ENCODE measurements at regions of chr16 and their contacts with region 1.

Region 1: DNA sequence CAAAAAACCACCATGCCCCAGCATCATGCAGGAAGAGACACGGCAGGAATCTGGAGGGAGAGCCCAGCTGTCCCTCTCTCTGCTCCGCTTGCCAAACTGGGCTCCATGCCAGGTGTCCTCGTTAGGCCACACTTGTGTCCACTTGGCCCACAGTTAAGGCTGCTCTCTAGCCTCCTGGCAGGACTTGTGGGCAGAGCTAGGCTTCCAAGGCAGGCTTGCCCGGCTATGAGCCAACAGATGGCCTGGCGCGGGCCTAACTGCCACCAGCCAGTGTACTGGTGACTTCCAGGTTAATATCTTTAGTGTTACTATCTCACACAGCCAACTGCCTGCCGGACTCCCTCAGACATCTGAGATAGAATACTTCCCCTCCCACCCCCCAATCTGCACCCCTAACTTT is 10.6 kb downstream of the ATP6V0D1 start:
- DNase-seq: no peak
- ATAC-seq: no peak
- H3K4me3 Mint-ChIP-seq: no peak overlapping the region
- H3K27ac Mint-ChIP-seq: peak overlapping the region; percentile 0
- H3K4me1 Mint-ChIP-seq: peaks cover 17% of the 10 kb centered on the region
- H3K27me3 Mint-ChIP-seq: no peaks in the 10 kb centered on the region

Region 2: GRCh38 chr16:66947302-66948065 is 522.9 kb before region 1 on chr16:
- CTCF ChIA-PET with region 1: no interaction called
- POLR2A ChIA-PET with region 1: no interaction called
- intact Hi-C with region 1: loop called in 1 of 2 experiments (anchors 5 kb)
- DNase-seq: peak; percentile 92
- ATAC-seq: peak; percentile 92
- H3K4me3 Mint-ChIP-seq: peak overlapping the region; percentile 67
- H3K27ac Mint-ChIP-seq: no peak overlapping the region
- H3K4me1 Mint-ChIP-seq: peaks cover 22% of the 10 kb centered on the region
- H3K27me3 Mint-ChIP-seq: peaks cover 29% of the 10 kb centered on the region

Region 3: GRCh38 chr16:67246934-67247697 is 223.2 kb before region 1 on chr16 and contains the start of gene FHOD1:
- CTCF ChIA-PET with region 1: no interaction called
- POLR2A ChIA-PET with region 1: no interaction called
- intact Hi-C with region 1: no loop called
- DNase-seq: peak; percentile 99
- ATAC-seq: peak; percentile 74
- H3K4me3 Mint-ChIP-seq: peak within 1 kb of the TSS; percentile 87
- H3K27ac Mint-ChIP-seq: peak within 1 kb of the TSS; percentile 85
- H3K4me1 Mint-ChIP-seq: peaks cover 52% of the 10 kb centered on the region
- H3K27me3 Mint-ChIP-seq: peaks cover 11% of the 10 kb centered on the region
- total RNA-seq, gene FHOD1: 75.5 to 77.2 TPM

Region 4: GRCh38 chr16:67260426-67261075 is 209.8 kb before region 1 on chr16:
- CTCF ChIA-PET with region 1: interaction called, 3 read pairs
- POLR2A ChIA-PET with region 1: no interaction called
- intact Hi-C with region 1: loop called in 1 of 2 experiments (anchors 5 kb)
- DNase-seq: peak; percentile 67
- ATAC-seq: peak; percentile 90
- H3K4me3 Mint-ChIP-seq: no peak overlapping the region
- H3K27ac Mint-ChIP-seq: no peak overlapping the region
- H3K4me1 Mint-ChIP-seq: peaks cover 2% of the 10 kb centered on the region
- H3K27me3 Mint-ChIP-seq: peaks cover 2% of the 10 kb centered on the region

Region 5: GRCh38 chr16:67349172-67349571 is 121.2 kb before region 1 on chr16:
- CTCF ChIA-PET with region 1: interaction called, 4 read pairs
- POLR2A ChIA-PET with region 1: no interaction called
- intact Hi-C with region 1: loop called in 1 of 2 experiments (anchors 5 kb)
- DNase-seq: no peak
- ATAC-seq: peak; percentile 55
- H3K4me3 Mint-ChIP-seq: no peak overlapping the region
- H3K27ac Mint-ChIP-seq: no peak overlapping the region
- H3K4me1 Mint-ChIP-seq: peaks cover 2% of the 10 kb centered on the region
- H3K27me3 Mint-ChIP-seq: peaks cover 2% of the 10 kb centered on the region

Region 6: DNA sequence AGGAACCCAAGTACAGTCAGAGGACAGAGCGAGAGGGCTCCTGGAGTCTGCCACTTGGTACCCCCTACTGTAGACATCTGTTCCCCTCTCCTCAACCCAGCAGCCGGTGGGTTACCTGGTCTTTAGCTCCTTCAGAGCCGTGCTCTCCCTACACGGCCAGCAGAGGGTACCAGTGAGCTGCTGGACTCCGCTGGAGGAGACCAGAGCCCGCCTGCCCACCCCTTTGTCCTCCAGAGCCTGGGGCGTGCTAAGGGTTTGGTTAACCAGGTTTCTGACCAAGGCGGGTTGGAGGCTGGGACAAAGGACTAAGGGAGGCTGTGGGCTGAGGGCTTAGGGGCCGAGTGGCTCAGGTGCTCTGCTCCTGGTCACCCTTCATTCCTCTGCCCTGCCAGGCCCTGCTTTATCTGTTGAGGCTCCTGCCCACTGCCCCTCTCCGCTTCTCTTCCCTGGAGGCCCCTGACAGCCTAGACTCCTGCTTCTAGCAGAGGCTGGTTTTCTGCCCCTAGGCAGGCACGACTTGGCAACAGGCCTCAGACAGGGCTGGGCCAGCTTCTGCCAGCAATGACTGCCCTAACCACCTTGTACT is 42.1 kb before region 1 on chr16:
- CTCF ChIA-PET with region 1: interaction called, 34 read pairs
- POLR2A ChIA-PET with region 1: no interaction called
- intact Hi-C with region 1: loop called (anchors 1 to 2 kb)
- DNase-seq: peak; percentile 81
- ATAC-seq: peak; percentile 78
- H3K4me3 Mint-ChIP-seq: no peak overlapping the region
- H3K27ac Mint-ChIP-seq: no peak overlapping the region
- H3K4me1 Mint-ChIP-seq: peaks cover 12% of the 10 kb centered on the region
- H3K27me3 Mint-ChIP-seq: peaks cover 39% of the 10 kb centered on the region

Region 7: DNA sequence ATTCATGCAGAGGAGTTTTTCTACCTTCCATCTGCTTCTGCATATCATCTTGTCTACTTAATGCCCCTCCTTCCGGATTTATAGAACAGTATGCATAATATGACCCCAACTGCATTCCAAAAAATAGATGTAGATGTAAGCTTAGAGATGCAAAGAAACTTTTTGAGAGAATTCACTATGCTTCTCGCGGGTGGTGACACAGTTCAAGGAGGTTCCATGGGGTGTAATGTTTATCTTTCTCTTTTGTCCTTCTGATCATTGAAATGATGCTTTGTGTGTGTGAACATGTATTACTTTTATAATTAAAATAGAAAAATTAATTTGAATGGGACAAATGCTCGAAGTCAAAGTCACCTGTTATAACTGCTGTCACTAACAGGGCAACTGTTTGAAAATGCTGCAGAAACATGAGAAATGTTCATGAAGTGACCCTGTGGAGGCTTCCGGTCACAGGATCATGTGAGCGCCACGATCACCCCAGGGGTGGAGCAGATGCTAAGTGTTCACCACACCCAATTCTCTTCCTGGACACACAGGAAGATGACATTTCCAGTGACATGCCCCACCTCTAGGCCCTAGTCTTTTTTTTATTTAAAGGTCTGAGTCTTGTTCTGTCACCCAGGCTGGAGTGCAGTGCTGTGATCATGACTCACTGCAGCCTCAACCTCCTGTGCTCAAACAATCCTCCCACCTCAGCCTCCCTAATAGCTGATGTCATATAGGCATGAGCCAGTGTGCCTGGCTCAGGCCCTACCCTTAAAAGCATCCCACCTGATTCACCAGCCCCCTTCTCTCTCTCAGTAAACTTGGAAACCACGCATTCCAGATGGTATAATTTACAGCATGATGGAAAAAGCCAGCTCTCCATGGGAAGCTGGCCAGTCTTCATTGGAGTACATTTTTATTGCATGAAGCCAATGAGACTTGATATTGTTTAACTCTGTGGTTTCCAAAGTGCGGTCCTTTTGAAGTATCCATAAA is 34.0 kb after region 1 on chr16:
- CTCF ChIA-PET with region 1: no interaction called
- POLR2A ChIA-PET with region 1: no interaction called
- intact Hi-C with region 1: no loop called
- DNase-seq: peak; percentile 66
- ATAC-seq: peak; percentile 96
- H3K4me3 Mint-ChIP-seq: no peak overlapping the region
- H3K27ac Mint-ChIP-seq: peak overlapping the region; percentile 72
- H3K4me1 Mint-ChIP-seq: peaks cover 45% of the 10 kb centered on the region
- H3K27me3 Mint-ChIP-seq: no peaks in the 10 kb centered on the region

Region 8: DNA sequence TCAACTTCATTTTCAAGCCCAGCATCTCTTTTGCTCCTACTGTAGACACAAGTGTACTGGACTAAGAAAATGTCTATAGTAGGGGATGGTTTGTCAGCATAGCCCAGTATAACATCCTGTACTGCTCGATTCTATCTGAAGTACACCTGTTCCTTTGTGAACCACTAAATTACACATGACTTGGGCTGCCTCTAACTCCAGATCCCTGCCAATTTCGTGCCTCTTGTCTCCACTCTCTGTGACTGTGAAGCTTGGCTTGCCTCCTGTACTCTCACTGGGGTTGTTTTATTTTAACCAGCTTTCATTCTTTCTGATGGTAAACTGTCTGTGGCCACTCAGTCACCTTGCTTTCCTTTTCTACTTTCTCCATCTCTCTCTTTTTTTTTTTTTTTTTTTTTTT is 224.3 kb after region 1 on chr16:
- CTCF ChIA-PET with region 1: no interaction called
- POLR2A ChIA-PET with region 1: no interaction called
- intact Hi-C with region 1: no loop called
- DNase-seq: no peak
- ATAC-seq: no peak
- H3K4me3 Mint-ChIP-seq: no peak overlapping the region
- H3K27ac Mint-ChIP-seq: no peak overlapping the region
- H3K4me1 Mint-ChIP-seq: peaks cover 2% of the 10 kb centered on the region
- H3K27me3 Mint-ChIP-seq: no peaks in the 10 kb centered on the region

Measured in activated CD4-positive, alpha-beta T cell treated with anti-CD3 and anti-CD28 coated beads for 36 hours (primary cell).